ENCODE measurements at regions of chr10 and their contacts with region 1.

Region 1: DNA sequence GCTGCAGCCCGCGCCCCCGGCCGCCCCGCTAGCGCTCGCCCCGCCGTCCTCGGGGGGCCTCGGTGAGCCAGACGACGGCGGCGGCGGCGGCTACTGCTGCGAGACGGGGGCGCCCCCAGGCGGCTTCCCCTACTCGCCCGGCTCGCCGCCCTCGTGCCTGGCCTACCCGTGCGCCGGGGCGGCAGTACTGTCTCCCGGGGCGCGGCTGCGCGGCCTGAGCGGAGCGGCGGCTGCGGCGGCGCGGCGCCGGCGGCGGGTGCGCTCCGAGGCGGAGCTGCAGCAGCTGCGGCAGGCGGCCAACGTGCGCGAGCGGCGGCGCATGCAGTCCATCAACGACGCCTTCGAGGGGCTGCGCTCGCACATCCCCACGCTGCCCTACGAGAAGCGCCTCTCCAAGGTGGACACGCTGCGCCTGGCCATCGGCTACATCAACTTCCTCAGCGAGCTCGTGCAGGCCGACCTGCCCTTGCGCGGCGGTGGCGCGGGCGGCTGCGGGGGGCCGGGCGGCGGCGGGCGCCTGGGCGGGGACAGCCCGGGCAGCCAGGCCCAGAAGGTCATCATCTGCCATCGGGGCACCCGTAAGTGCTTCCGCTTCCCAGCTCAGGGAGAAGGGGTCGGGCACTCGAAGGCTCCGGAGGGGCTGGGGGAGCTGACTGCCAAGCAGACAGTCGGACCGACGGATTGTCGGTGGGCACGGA is 774 bp downstream of the PTF1A start:
- DNase-seq: no peak
- H3K4me3 Mint-ChIP-seq: no peak overlapping the region
- H3K27ac Mint-ChIP-seq: no peak overlapping the region
- H3K4me1 Mint-ChIP-seq: no peaks in the 10 kb centered on the region
- H3K27me3 Mint-ChIP-seq: peaks cover 70% of the 10 kb centered on the region

Region 2: GRCh38 chr10:23173214-23174073 is 19.4 kb before region 1 on chr10:
- intact Hi-C with region 1: loop called (anchors 2 kb)
- DNase-seq: no peak
- H3K4me3 Mint-ChIP-seq: no peak overlapping the region
- H3K27ac Mint-ChIP-seq: no peak overlapping the region
- H3K4me1 Mint-ChIP-seq: no peaks in the 10 kb centered on the region
- H3K27me3 Mint-ChIP-seq: peaks cover 62% of the 10 kb centered on the region

Region 3: GRCh38 chr10:23648618-23649017 is 455.7 kb after region 1 on chr10:
- intact Hi-C with region 1: no loop called
- DNase-seq: no peak
- H3K4me3 Mint-ChIP-seq: no peak overlapping the region
- H3K27ac Mint-ChIP-seq: no peak overlapping the region
- H3K4me1 Mint-ChIP-seq: no peaks in the 10 kb centered on the region
- H3K27me3 Mint-ChIP-seq: peaks cover 3% of the 10 kb centered on the region

Region 4: DNA sequence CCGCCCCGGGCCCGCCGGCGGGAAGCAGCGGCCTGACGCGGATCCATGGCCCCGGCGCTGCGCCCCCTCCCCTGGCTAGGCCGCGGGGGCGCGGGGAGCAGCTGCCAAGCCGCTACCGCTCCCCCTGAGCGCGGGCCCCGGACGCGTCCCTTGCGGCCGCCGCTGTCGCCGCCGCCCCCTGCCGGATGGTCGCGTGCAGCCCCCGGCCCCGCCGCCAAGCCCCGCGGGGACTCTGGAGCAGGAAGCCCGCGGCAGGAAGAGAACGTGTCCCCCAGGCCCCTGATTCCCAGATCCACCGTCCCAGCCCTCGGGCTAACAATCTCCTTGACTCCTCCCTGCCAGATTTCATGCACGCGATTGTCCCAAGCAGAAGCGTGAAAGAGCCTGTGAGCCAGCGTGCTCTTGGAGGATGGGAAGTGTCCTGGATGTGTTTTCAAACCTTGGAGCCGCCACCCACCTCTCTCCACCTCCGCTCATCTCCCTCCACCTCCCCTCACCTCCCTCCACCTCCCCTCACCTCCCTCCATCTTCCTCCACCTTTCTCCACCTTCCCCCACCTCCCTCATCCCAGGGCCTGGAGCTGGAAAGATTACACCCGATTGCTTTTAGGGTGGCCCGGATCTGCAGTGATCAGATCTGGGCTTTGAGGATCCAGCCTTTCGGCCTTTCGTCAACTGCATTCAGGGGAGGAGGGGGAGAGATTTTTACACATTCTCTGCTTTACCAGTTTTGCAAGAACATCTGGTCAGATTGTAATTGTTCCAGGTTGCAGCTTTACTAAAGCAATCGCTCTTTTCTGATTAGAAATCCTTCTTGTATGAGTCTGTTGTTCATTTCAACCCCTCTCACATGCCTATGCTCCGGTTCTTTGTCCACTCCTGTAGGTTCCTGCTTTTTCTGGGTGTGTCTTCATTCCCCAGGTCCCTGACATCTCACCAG is 1760.1 kb after region 1 on chr10:
- intact Hi-C with region 1: no loop called
- DNase-seq: peak; percentile 15
- H3K4me3 Mint-ChIP-seq: peak overlapping the region; percentile 64
- H3K27ac Mint-ChIP-seq: peak overlapping the region; percentile 29
- H3K4me1 Mint-ChIP-seq: peaks cover 9% of the 10 kb centered on the region
- H3K27me3 Mint-ChIP-seq: peaks cover 10% of the 10 kb centered on the region